CD14-positive monocyte (primary cell): ENCODE measurements at regions of chr4 and their contacts with region 1.

Region 1: GRCh38 chr4:38759113-38759789 is 23.5 kb downstream of the TLR10 start:
- DNase-seq: peak; percentile 47 to 66 (median 55)
- H3K4me3 ChIP-seq: no peak overlapping the region
- H3K4me3 Mint-ChIP-seq: no peak overlapping the region
- H3K27ac ChIP-seq: no peak overlapping the region
- H3K27ac Mint-ChIP-seq: peak overlapping the region in 1 of 7 donors; percentile 43
- H3K4me1 ChIP-seq: peaks cover 56 to 70% of the 10 kb centered on the region in 2 donors
- H3K4me1 Mint-ChIP-seq: peaks cover 56% of the 10 kb centered on the region
- H3K27me3 ChIP-seq: no peaks in the 10 kb centered on the region
- H3K27me3 Mint-ChIP-seq: no peaks in the 10 kb centered on the region
- CTCF ChIP-seq: peak; percentile 91

Region 2: GRCh38 chr4:38804654-38805295 is 45.5 kb after region 1 on chr4 and contains the start of gene TLR1:
- intact Hi-C with region 1: loop called (anchors 1 to 10 kb)
- DNase-seq: peak; percentile 66 to 88 (median 70)
- H3K4me3 ChIP-seq: peak within 1 kb of the TSS; percentile 66 to 100 (median 98)
- H3K4me3 Mint-ChIP-seq: peak within 1 kb of the TSS; percentile 83 to 95
- H3K27ac ChIP-seq: peak within 1 kb of the TSS; percentile 73 to 89
- H3K27ac Mint-ChIP-seq: peak within 1 kb of the TSS; percentile 90 to 97 (median 96)
- H3K4me1 ChIP-seq: peaks cover 64 to 71% of the 10 kb centered on the region in 2 donors
- H3K4me1 Mint-ChIP-seq: peaks cover 65% of the 10 kb centered on the region
- H3K27me3 ChIP-seq: no peaks in the 10 kb centered on the region
- H3K27me3 Mint-ChIP-seq: no peaks in the 10 kb centered on the region
- CTCF ChIP-seq: peak; percentile 83
- polyA plus RNA-seq, gene TLR1: 49.8 to 117 (median 62.2) TPM